ENCODE measurements at regions of chr2 and their contacts with region 1.

Region 1: GRCh38 chr2:230209422-230210051 is 10.2 kb downstream of the SP110 start:
- DNase-seq: no peak
- ATAC-seq: peak; percentile 85
- H3K4me3 Mint-ChIP-seq: no peak overlapping the region
- H3K27ac Mint-ChIP-seq: no peak overlapping the region
- H3K4me1 Mint-ChIP-seq: peaks cover 37% of the 10 kb centered on the region
- H3K27me3 Mint-ChIP-seq: no peaks in the 10 kb centered on the region
- CTCF ChIP-seq: no peak

Region 2: DNA sequence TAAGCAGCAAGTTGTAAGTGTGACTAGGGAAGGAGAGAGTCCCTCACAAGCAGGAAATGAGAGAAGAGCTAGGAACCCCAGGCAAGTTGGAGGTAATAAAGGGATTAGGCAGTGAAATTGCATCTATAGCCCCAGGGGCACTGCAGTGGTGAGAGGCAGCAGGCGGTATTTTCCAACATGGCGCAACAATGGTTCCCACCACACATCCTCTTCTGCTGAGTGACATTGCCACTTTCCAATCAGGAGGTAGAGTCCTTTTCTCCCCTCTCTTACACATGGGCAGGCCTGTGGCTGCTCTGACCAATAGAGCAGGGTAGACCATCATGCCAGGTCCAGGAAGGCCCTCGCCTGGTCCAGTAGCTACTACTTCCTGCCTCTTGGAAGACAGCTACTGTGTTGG is 581.8 kb before region 1 on chr2:
- CTCF ChIA-PET with region 1: no interaction called
- POLR2A ChIA-PET with region 1: no interaction called
- intact Hi-C with region 1: no loop called
- DNase-seq: no peak
- ATAC-seq: no peak
- H3K4me3 Mint-ChIP-seq: no peak overlapping the region
- H3K27ac Mint-ChIP-seq: no peak overlapping the region
- H3K4me1 Mint-ChIP-seq: no peaks in the 10 kb centered on the region
- H3K27me3 Mint-ChIP-seq: peaks cover 8% of the 10 kb centered on the region
- CTCF ChIP-seq: no peak

Region 3: GRCh38 chr2:229921892-229922445 is 287.6 kb before region 1 on chr2 and contains the start of gene TRIP12:
- CTCF ChIA-PET with region 1: no interaction called
- POLR2A ChIA-PET with region 1: no interaction called
- intact Hi-C with region 1: no loop called
- DNase-seq: peak; percentile 94
- ATAC-seq: peak; percentile 76
- H3K4me3 Mint-ChIP-seq: peak within 1 kb of the TSS; percentile 94
- H3K27ac Mint-ChIP-seq: peak within 1 kb of the TSS; percentile 96
- H3K4me1 Mint-ChIP-seq: peaks cover 42% of the 10 kb centered on the region
- H3K27me3 Mint-ChIP-seq: no peaks in the 10 kb centered on the region
- CTCF ChIP-seq: no peak
- total RNA-seq, gene TRIP12: 255 and 272 TPM in 2 replicates

Region 4: GRCh38 chr2:230219419-230220331 is 10.1 kb after region 1 on chr2 and contains the start of gene SP110:
- CTCF ChIA-PET with region 1: interaction called, 17 read pairs
- POLR2A ChIA-PET with region 1: interaction called, 268 read pairs
- intact Hi-C with region 1: loop called (anchors 1 kb)
- DNase-seq: peak; percentile 61
- ATAC-seq: peak; percentile 73
- H3K4me3 Mint-ChIP-seq: peak within 1 kb of the TSS; percentile 96
- H3K27ac Mint-ChIP-seq: peak within 1 kb of the TSS; percentile 97
- H3K4me1 Mint-ChIP-seq: peaks cover 90% of the 10 kb centered on the region
- H3K27me3 Mint-ChIP-seq: no peaks in the 10 kb centered on the region
- CTCF ChIP-seq: no peak
- total RNA-seq, gene SP110: 139 and 147 TPM in 2 replicates

Measured in activated B cell treated with CpG ODN at 0.5 μM for 24 hours (primary cell).